Right ventricle myocardium inferior (tissue), 1 donor: ENCODE measurements at regions of chr9 and their contacts with region 1.

Region 1: GRCh38 chr9:26975693-26976059 is 19.5 kb downstream of the IFT74 start:
- DNase-seq: no peak
- ATAC-seq: peak; percentile 52

Region 2: DNA sequence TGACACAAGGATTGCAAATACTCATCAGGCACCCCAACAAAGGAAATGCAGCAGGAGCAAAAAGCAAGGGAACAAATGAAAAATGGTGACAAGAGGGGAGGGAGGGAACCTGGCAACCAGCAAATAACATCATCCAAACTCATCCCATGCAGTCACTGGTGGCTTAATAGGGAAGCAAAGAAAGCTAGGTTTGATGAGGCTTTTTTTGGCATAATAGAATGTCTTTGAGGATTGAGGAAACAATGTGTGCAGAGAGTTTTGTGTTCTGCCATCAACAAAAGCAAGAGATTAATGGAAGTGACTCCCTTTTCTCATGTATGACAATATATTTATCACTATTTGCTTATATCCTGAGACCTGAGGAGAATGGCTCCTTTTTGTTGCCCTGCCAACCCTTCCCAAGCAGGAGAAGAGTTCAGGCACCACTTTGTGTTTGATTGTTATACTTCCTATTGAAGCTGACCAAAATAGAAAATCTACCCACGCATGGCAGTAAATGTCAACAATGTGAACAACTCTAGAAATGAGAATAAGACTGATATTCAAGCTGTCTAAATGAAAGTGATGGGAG is 458.8 kb before region 1 on chr9:
- intact Hi-C with region 1: no loop called
- DNase-seq: no peak
- ATAC-seq: no peak

Region 3: GRCh38 chr9:26744191-26744965 is 231.3 kb before region 1 on chr9:
- intact Hi-C with region 1: loop called (anchors 2 kb)
- DNase-seq: no peak
- ATAC-seq: no peak

Region 4: GRCh38 chr9:27645161-27645840 is 669.6 kb after region 1 on chr9:
- intact Hi-C with region 1: no loop called
- DNase-seq: no peak
- ATAC-seq: no peak